CD8-positive, alpha-beta T cell (primary cell): ENCODE measurements at regions of chr10 and their contacts with region 1.

Region 1: GRCh38 chr10:5385224-5385623 is 19.4 kb downstream of the TUBAL3 start:
- DNase-seq: no peak
- ATAC-seq: no peak
- H3K4me3 ChIP-seq: no peak overlapping the region
- H3K4me3 Mint-ChIP-seq: no peak overlapping the region
- H3K27ac ChIP-seq: no peak overlapping the region
- H3K27ac Mint-ChIP-seq: no peak overlapping the region
- H3K4me1 ChIP-seq: no peaks in the 10 kb centered on the region
- H3K4me1 Mint-ChIP-seq: peaks cover 2% of the 10 kb centered on the region
- H3K27me3 ChIP-seq: no peaks in the 10 kb centered on the region
- H3K27me3 Mint-ChIP-seq: no peaks in the 10 kb centered on the region
- CTCF ChIP-seq: no peak

Region 2: DNA sequence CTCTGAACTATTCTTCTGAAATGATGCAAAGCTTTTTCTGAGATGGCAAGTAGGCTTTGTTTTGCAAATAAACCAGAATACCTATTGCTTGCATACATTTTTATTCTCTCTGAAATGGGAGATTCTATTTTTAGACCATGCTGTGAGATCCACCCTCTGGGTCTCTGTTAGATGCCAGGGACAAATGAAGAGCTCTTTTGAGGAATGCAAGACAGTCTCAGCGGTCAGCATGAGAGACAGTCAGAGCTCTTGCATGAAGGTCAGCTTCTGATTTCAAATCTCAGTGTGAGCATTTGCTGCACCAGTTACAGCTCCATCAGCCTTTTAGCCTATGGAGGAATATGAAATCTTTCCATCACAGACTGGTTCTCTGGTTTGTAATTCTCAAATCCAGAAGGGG is 1170.3 kb before region 1 on chr10:
- CTCF ChIA-PET with region 1: no interaction called
- POLR2A ChIA-PET with region 1: no interaction called
- intact Hi-C with region 1: no loop called
- DNase-seq: no peak
- ATAC-seq: no peak
- H3K4me3 ChIP-seq: no peak overlapping the region
- H3K4me3 Mint-ChIP-seq: no peak overlapping the region
- H3K27ac ChIP-seq: no peak overlapping the region
- H3K27ac Mint-ChIP-seq: no peak overlapping the region
- H3K4me1 ChIP-seq: no peaks in the 10 kb centered on the region
- H3K4me1 Mint-ChIP-seq: no peaks in the 10 kb centered on the region
- H3K27me3 ChIP-seq: no peaks in the 10 kb centered on the region
- H3K27me3 Mint-ChIP-seq: no peaks in the 10 kb centered on the region
- CTCF ChIP-seq: no peak

Region 3: DNA sequence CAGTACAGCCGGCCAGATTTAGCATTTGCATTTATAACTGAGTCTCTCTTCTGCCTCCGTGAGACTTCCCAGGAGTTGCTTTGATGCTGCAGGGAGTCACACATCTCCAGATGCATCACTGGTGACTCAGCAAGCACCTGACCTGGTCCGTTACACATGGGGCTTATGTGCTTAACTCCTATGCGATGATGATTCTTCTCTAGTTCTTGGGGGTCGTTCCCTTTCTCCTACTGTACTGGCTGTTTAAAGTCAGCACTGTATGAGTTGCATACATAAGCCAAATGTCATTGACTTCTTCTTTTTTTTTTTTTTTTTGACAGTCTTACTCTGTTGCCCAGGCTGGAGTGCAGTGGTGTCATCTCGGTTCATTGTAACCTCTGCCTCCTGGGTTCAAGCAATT is 572.2 kb before region 1 on chr10:
- CTCF ChIA-PET with region 1: no interaction called
- POLR2A ChIA-PET with region 1: no interaction called
- intact Hi-C with region 1: loop called in 1 of 2 experiments (anchors 10 kb)
- DNase-seq: no peak
- ATAC-seq: no peak
- H3K4me3 ChIP-seq: no peak overlapping the region
- H3K4me3 Mint-ChIP-seq: no peak overlapping the region
- H3K27ac ChIP-seq: no peak overlapping the region
- H3K27ac Mint-ChIP-seq: no peak overlapping the region
- H3K4me1 ChIP-seq: no peaks in the 10 kb centered on the region
- H3K4me1 Mint-ChIP-seq: no peaks in the 10 kb centered on the region
- H3K27me3 ChIP-seq: peaks cover 0 to 3% of the 10 kb centered on the region in 2 experiments
- H3K27me3 Mint-ChIP-seq: peaks cover 7% of the 10 kb centered on the region
- CTCF ChIP-seq: no peak

Region 4: DNA sequence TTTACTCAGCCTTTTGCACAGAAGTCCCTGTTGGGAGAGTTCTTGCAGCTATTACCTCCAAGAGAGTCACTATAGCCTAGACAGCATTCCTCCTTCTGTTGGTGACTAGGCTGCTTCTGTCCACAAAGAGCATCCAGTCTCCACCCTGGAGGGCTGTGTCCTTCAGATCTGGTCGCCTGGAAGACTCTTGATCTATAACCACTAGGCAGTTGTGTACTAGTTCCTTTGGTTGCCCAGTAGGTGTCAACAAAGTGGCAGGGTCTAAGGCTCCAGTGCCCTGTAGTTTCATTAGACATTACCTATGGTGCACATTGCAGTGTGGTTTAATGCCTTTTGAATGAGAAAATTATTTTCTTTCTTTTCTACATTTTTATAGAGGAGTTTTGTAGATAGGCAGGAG is 370.3 kb before region 1 on chr10:
- CTCF ChIA-PET with region 1: no interaction called
- POLR2A ChIA-PET with region 1: no interaction called
- intact Hi-C with region 1: loop called in 1 of 2 experiments (anchors 10 kb)
- DNase-seq: peak in 1 of 9 experiments; percentile 4
- ATAC-seq: no peak
- H3K4me3 ChIP-seq: no peak overlapping the region
- H3K4me3 Mint-ChIP-seq: no peak overlapping the region
- H3K27ac ChIP-seq: no peak overlapping the region
- H3K27ac Mint-ChIP-seq: no peak overlapping the region
- H3K4me1 ChIP-seq: no peaks in the 10 kb centered on the region
- H3K4me1 Mint-ChIP-seq: no peaks in the 10 kb centered on the region
- H3K27me3 ChIP-seq: no peaks in the 10 kb centered on the region
- H3K27me3 Mint-ChIP-seq: peaks cover 5% of the 10 kb centered on the region
- CTCF ChIP-seq: no peak

Region 5: DNA sequence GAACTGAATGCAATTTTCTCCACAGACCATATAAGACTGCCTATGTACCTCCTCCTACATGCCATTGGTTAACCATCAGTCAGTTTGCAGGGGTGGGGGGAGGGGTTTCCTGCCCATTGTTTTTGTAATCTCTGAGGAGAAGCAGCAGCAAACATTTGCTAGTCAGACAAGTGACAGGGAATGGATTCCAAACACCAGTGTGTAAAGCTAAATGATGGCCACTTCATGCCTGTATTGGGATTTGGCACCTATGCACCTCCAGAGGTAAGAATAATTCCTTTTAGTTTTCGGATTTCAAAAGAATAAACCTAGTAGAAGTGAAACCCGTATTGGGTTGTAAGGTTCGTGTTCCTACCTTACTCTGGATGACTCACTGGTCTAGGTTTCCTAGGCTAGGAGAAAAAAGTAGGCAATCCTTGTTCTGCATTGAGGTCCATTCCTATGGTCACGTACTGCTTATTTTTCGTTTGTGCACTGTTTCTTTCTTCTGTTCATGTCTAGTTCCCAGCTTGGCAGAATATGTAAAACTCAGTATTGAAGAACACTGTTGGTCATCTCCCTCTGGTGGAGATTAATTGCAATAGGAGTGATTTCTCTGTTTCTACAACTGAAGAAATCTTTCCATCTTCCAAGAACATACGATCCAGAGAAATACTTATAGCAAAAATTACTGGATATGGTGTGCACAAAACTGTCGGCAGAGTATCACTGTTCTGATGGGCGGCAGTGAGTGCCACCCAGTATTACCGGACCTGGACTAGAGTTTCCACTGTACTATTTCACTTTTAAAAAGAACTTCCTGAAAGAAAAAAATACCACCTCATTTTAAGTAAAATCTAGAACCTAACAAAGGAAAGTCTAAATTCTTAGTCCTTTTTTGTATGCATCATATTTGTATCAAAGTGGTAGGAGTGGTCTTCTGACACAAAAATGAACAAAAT is 290.7 kb before region 1 on chr10 and contains the start of gene AKR1C3:
- CTCF ChIA-PET with region 1: interaction called, 4 read pairs
- POLR2A ChIA-PET with region 1: no interaction called
- intact Hi-C with region 1: loop called (anchors 5 to 10 kb)
- DNase-seq: peak in 2 of 9 experiments; percentile 48 to 51
- ATAC-seq: peak; percentile 77
- H3K4me3 ChIP-seq: peak within 1 kb of the TSS; percentile 44 to 50
- H3K4me3 Mint-ChIP-seq: peak within 1 kb of the TSS; percentile 80
- H3K27ac ChIP-seq: peak within 1 kb of the TSS in 1 of 2 experiments; percentile 34
- H3K27ac Mint-ChIP-seq: peak within 1 kb of the TSS; percentile 3
- H3K4me1 ChIP-seq: peaks cover 3% of the 10 kb centered on the region
- H3K4me1 Mint-ChIP-seq: peaks cover 6% of the 10 kb centered on the region
- H3K27me3 ChIP-seq: no peaks in the 10 kb centered on the region
- H3K27me3 Mint-ChIP-seq: no peaks in the 10 kb centered on the region
- CTCF ChIP-seq: peak; percentile 48
- total RNA-seq, gene AKR1C3: 0.53 to 0.57 TPM

Region 6: DNA sequence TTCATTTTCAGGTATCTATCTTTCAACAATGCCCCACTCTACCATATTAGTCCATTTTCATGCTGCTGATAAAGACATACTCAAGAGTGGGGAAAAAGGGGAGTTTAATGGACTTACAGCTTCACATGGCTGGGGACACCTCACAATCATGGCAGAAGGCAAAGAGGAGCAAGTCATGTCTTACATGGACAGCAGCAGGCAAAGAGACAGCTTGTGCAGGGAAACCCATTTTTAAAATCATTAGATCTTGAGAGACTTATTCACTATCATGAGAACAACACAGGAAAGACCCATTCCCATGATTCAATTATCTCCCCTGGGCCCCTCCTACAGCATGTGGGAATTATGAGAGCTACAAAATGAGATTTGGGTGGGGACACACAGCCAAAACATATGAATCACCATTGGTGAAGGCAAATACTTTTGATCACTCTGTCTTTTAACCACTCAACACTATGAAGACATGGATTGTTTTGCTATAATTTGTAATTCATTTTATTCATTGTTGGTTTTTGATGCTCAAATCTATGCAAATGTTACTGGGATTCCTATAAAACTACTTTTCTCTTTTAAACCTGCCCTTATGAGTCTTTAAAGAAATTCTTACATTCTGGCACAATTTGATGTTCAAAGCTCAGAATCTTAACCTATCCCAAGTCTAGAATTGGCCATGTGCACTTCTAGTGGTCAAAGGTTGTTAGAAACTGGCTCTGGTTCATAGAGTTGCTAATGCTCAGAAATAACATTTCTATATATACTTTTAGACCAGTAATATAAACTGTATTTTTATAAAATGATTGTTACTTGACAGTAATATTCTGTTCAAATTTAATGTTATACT is 173.3 kb before region 1 on chr10:
- CTCF ChIA-PET with region 1: no interaction called
- POLR2A ChIA-PET with region 1: no interaction called
- intact Hi-C with region 1: loop called in 1 of 2 experiments (anchors 5 kb)
- DNase-seq: no peak
- ATAC-seq: no peak
- H3K4me3 ChIP-seq: no peak overlapping the region
- H3K4me3 Mint-ChIP-seq: no peak overlapping the region
- H3K27ac ChIP-seq: no peak overlapping the region
- H3K27ac Mint-ChIP-seq: no peak overlapping the region
- H3K4me1 ChIP-seq: no peaks in the 10 kb centered on the region
- H3K4me1 Mint-ChIP-seq: no peaks in the 10 kb centered on the region
- H3K27me3 ChIP-seq: no peaks in the 10 kb centered on the region
- H3K27me3 Mint-ChIP-seq: peaks cover 6% of the 10 kb centered on the region
- CTCF ChIP-seq: no peak

Region 7: DNA sequence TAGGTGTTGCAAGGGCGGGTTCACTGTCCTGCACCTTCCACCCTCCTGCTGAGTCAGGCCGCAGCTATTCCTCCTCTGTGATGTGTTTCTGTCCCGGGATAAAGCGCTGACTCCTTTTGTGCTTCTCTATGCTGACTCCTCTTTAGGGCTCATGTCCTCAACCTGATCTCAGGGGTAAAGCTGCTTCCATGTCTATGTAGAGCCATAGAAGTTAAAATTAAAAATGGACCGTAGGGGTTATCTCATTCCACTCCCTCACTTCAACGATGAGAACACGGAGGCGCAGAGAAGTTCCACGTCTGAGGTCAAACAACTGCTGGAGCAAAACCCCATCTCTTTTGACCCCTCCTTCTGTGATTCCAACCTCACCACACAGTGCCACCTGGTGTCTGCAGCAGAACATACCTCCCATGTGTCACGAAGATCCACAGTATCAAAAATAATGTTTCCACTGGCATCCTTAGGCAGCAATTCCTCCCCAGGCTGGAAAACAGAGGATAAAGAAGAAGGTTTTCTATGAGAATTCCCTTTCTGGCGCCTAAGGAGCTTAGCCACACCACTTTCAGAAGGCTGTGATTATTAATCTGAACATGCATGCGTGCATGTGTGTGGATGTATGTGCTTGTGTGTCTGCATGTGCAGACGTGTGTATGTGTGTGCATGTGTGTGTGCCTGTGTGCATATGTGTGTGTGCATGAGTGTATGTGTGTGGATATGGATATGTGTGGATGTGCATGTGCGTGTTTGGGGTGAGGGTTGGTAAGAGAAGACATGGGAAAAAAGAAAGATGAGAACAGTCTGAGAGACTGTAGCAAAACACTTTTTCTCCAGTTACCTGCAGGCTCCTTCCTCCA is 101.7 kb before region 1 on chr10:
- CTCF ChIA-PET with region 1: interaction called, 6 read pairs
- POLR2A ChIA-PET with region 1: no interaction called
- intact Hi-C with region 1: loop called in 1 of 2 experiments (anchors 5 kb)
- DNase-seq: peak in 8 of 9 experiments; percentile 15 to 67 (median 54)
- ATAC-seq: peak; percentile 73
- H3K4me3 ChIP-seq: no peak overlapping the region
- H3K4me3 Mint-ChIP-seq: no peak overlapping the region
- H3K27ac ChIP-seq: no peak overlapping the region
- H3K27ac Mint-ChIP-seq: no peak overlapping the region
- H3K4me1 ChIP-seq: peaks cover 11% of the 10 kb centered on the region
- H3K4me1 Mint-ChIP-seq: peaks cover 17% of the 10 kb centered on the region
- H3K27me3 ChIP-seq: no peaks in the 10 kb centered on the region
- H3K27me3 Mint-ChIP-seq: no peaks in the 10 kb centered on the region
- CTCF ChIP-seq: peak; percentile 52

Region 8: DNA sequence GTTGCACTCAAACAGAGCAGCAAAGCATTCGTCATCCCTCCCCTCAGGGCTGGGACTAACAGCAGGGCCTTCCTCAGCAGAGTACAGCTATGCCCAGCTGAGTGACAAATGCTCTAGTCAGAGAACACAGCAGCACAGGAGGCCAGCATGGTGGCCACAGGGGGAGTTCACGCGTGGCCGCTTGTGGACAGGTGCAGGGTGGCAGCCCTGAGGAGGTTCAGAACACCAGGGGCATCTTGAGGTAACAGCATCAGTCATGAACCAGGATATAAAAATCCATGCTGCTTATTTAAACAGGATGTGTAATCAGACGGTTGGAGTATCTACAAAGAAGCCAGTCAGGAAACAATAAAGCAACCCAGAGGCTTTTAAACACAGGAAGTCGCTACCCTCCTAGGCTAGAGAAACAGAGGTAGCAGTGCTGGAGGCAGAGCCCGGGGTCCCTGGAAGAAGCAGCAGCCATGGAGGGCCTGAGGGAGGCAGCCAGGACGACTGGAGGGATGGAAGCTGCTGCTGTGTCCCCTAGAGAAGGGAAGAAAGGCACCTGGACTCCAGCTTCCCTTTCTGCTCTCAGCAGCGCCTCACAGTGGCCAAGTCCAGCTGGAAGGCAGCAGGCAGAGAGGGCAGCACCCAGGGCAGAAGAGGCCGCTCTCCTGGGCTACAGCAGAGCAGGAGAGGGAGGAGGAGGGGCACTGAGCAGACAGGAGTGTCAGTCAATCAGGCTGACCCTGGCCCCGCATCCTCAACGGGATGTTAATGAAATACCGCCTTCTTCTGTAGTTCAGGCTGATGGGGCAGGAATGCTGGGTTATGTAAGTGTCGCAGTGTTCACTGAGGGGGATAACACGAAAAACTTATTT is 91.3 kb before region 1 on chr10:
- CTCF ChIA-PET with region 1: interaction called, 4 read pairs
- POLR2A ChIA-PET with region 1: no interaction called
- intact Hi-C with region 1: loop called in 1 of 2 experiments (anchors 5 kb)
- DNase-seq: peak in 8 of 9 experiments; percentile 34 to 70 (median 58)
- ATAC-seq: peak; percentile 58
- H3K4me3 ChIP-seq: peak overlapping the region; percentile 3 to 48
- H3K4me3 Mint-ChIP-seq: peak overlapping the region; percentile 88
- H3K27ac ChIP-seq: peak overlapping the region; percentile 44 to 71
- H3K27ac Mint-ChIP-seq: peak overlapping the region; percentile 100
- H3K4me1 ChIP-seq: peaks cover 62% of the 10 kb centered on the region
- H3K4me1 Mint-ChIP-seq: peaks cover 79% of the 10 kb centered on the region
- H3K27me3 ChIP-seq: no peaks in the 10 kb centered on the region
- H3K27me3 Mint-ChIP-seq: no peaks in the 10 kb centered on the region
- CTCF ChIP-seq: peak; percentile 27